ENCODE measurements at regions of chr2 and their contacts with region 1.

Region 1: GRCh38 chr2:47767880-47768609 is 14.9 kb upstream of the MSH6 start:
- DNase-seq: peak; percentile 42 to 86 (median 57)
- ATAC-seq: peak in 3 of 4 donors; percentile 82 to 87 (median 82)
- H3K4me3 ChIP-seq: no peak overlapping the region
- H3K27ac ChIP-seq: no peak overlapping the region
- H3K4me1 ChIP-seq: peaks cover 0 to 7% (median 0%) of the 10 kb centered on the region in 12 donors
- H3K27me3 ChIP-seq: peaks cover 0 to 6% (median 0%) of the 10 kb centered on the region in 9 donors
- CTCF ChIP-seq: peak; percentile 96 to 100 (median 99)
- POLR2A ChIP-seq: no peak

Region 2: DNA sequence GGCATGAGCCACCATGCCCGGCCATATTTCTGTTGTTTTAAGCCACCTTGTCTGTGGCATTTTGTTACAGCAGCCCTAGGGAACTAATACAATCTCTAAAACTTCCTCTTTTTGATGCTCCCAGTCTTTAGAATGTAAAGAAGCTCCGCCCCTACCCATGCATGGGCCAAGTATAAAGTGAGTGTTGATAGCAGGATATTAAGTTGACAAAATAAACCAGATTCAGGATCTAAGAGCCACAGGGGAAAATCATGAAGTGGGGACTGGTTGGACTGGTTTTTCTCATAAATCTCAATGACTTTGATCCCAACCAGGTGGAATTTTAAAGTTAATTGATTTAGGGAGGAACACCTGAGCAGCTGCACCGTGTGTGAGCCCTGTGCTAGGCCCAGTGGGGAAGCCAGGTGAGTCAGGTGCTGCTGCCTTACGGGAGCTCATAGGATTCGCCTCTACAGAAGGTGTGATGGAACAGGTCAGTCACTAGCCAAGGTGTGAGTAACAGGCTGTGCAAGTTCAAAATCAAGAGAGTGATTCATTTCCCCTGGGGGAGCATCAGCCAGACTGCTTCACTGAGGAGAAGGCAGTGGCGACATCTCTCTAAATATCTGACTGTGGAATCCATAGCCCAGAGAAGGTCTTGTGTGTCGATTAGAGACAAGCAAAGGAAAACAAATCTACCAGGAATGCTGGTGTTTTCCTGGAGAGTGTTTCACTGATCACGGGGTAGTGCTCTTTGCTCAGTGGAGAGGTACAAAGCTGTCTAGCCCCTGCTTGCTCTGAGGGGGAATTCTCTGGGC is 428.1 kb before region 1 on chr2:
- intact Hi-C with region 1: loop called in 7 of 10 experiments (anchors 5 to 10 kb)
- DNase-seq: no peak
- ATAC-seq: no peak
- H3K4me3 ChIP-seq: no peak overlapping the region
- H3K27ac ChIP-seq: no peak overlapping the region
- H3K4me1 ChIP-seq: peaks cover 0 to 26% (median 12%) of the 10 kb centered on the region in 12 donors
- H3K27me3 ChIP-seq: no peaks in the 10 kb centered on the region
- CTCF ChIP-seq: no peak
- POLR2A ChIP-seq: no peak

Region 3: DNA sequence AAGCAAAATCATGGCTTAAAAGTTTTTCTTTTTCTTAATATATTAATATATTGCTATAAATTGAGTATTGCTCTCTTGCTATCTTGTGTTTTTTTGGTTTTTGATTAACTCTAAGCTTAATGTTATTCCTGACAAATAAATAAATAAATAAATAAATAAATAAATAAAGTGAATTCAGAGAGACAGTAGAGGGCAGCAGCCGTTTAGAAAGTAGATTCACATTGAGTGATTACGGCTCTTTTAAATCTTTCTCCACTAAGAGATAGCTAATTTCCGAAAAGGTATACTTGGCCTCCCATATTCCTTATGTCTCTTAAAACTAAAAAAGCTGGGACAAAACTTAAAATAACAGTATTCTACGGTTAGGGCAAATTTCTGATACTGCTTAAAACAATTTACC is 330.8 kb before region 1 on chr2:
- intact Hi-C with region 1: loop called (anchors 1 to 5 kb)
- DNase-seq: peak in 1 of 5 donors; percentile 15
- ATAC-seq: peak in 2 of 4 donors; percentile 36 to 41
- H3K4me3 ChIP-seq: no peak overlapping the region
- H3K27ac ChIP-seq: no peak overlapping the region
- H3K4me1 ChIP-seq: no peaks in the 10 kb centered on the region
- H3K27me3 ChIP-seq: no peaks in the 10 kb centered on the region
- CTCF ChIP-seq: peak; percentile 24 to 73 (median 57)
- POLR2A ChIP-seq: no peak

Region 4: DNA sequence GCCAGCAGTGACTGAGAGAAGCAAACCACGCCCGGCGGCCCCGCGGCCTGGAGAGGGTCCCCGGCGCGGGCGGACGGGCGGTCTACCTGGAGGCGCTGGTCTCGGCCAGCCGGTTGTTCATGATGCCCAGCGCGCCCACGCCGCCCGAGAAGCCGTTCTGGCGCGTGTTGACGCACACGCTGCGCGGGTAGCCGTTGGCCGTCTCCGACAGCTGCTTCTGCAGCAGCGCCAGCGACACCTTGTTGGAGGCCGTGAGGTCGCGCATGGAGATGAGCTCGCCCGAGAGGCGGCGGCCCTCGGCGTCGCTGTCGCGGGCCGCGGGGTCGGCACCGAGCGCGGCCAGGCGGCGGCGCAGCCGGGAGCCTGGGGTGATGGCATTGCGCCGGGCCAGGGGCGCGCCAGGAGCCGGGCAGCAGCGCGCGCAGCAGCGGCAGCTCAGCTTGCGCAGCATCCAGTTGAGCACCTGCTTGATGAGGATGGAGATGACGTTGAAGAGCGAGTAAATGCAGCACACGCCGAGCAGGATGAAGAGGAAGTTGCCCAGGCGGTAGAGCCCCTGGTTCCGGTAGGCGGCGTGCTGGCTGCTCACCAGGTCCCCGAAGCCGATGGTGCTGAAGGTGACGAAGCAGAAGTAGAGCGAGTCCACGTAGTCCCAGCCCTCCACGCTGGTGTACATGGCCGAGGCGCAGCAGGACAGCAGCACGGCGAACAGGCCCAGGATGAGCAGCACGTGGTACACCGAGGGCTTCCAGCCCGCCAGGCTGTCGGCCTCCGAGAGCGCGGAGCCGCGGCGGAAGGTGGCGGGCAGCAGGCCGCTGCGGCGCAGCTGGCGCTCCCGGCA is 247.0 kb before region 1 on chr2:
- intact Hi-C with region 1: loop called in 1 of 10 experiments (anchors 10 kb)
- DNase-seq: peak; percentile 24 to 75 (median 51)
- ATAC-seq: peak; percentile 47 to 81 (median 72)
- H3K4me3 ChIP-seq: peak overlapping the region; percentile 7 to 64 (median 44)
- H3K27ac ChIP-seq: peak overlapping the region in 1 of 12 donors; percentile 67
- H3K4me1 ChIP-seq: peaks cover 0 to 15% (median 4%) of the 10 kb centered on the region in 12 donors
- H3K27me3 ChIP-seq: peaks cover 0 to 13% (median 3%) of the 10 kb centered on the region in 9 donors
- CTCF ChIP-seq: peak in 4 of 12 donors; percentile 22 to 42 (median 30)
- POLR2A ChIP-seq: no peak

Region 5: GRCh38 chr2:48092846-48093803 is 325.1 kb after region 1 on chr2:
- intact Hi-C with region 1: loop called in 2 of 10 experiments (anchors 10 kb)
- DNase-seq: peak in 1 of 5 donors; percentile 23
- ATAC-seq: peak in 2 of 4 donors; percentile 42 to 49
- H3K4me3 ChIP-seq: no peak overlapping the region
- H3K27ac ChIP-seq: peak overlapping the region in 2 of 12 donors; percentile 4 to 16
- H3K4me1 ChIP-seq: peaks cover 0 to 9% (median 0%) of the 10 kb centered on the region in 12 donors
- H3K27me3 ChIP-seq: no peaks in the 10 kb centered on the region
- CTCF ChIP-seq: no peak
- POLR2A ChIP-seq: no peak

Region 6: GRCh38 chr2:48107326-48107925 is 339.4 kb after region 1 on chr2:
- intact Hi-C with region 1: loop called in 3 of 10 experiments (anchors 5 to 10 kb)
- DNase-seq: no peak
- ATAC-seq: no peak
- H3K4me3 ChIP-seq: peak overlapping the region in 2 of 12 donors; percentile 27 to 33
- H3K27ac ChIP-seq: peak overlapping the region in 10 of 12 donors; percentile 2 to 59 (median 50)
- H3K4me1 ChIP-seq: peaks cover 0 to 35% (median 12%) of the 10 kb centered on the region in 12 donors
- H3K27me3 ChIP-seq: no peaks in the 10 kb centered on the region
- CTCF ChIP-seq: no peak
- POLR2A ChIP-seq: no peak

Measured in heart left ventricle (tissue), 16 donors.